Activated B cell treated with CpG ODN at 0.5 μM for 24 hours (primary cell): ENCODE measurements at regions of chr12 and their contacts with region 1.

Region 1: GRCh38 chr12:3275171-3276041 is 198.2 kb downstream of the TSPAN9 start:
- DNase-seq: peak; percentile 66
- ATAC-seq: peak; percentile 57
- H3K4me3 Mint-ChIP-seq: no peak overlapping the region
- H3K27ac Mint-ChIP-seq: no peak overlapping the region
- H3K4me1 Mint-ChIP-seq: peaks cover 2% of the 10 kb centered on the region
- H3K27me3 Mint-ChIP-seq: peaks cover 30% of the 10 kb centered on the region
- CTCF ChIP-seq: peak; percentile 77

Region 2: GRCh38 chr12:3135522-3136461 is 139.6 kb before region 1 on chr12:
- CTCF ChIA-PET with region 1: interaction called, 82 read pairs
- POLR2A ChIA-PET with region 1: no interaction called
- intact Hi-C with region 1: loop called (anchors 1 kb)
- DNase-seq: no peak
- ATAC-seq: peak; percentile 66
- H3K4me3 Mint-ChIP-seq: no peak overlapping the region
- H3K27ac Mint-ChIP-seq: no peak overlapping the region
- H3K4me1 Mint-ChIP-seq: no peaks in the 10 kb centered on the region
- H3K27me3 Mint-ChIP-seq: peaks cover 46% of the 10 kb centered on the region
- CTCF ChIP-seq: peak; percentile 74

Region 3: GRCh38 chr12:3202734-3203446 is 72.5 kb before region 1 on chr12:
- CTCF ChIA-PET with region 1: interaction called, 8 read pairs
- POLR2A ChIA-PET with region 1: no interaction called
- intact Hi-C with region 1: loop called (anchors 5 kb)
- DNase-seq: peak; percentile 33
- ATAC-seq: peak; percentile 60
- H3K4me3 Mint-ChIP-seq: no peak overlapping the region
- H3K27ac Mint-ChIP-seq: no peak overlapping the region
- H3K4me1 Mint-ChIP-seq: peaks cover 11% of the 10 kb centered on the region
- H3K27me3 Mint-ChIP-seq: peaks cover 53% of the 10 kb centered on the region
- CTCF ChIP-seq: no peak

Region 4: DNA sequence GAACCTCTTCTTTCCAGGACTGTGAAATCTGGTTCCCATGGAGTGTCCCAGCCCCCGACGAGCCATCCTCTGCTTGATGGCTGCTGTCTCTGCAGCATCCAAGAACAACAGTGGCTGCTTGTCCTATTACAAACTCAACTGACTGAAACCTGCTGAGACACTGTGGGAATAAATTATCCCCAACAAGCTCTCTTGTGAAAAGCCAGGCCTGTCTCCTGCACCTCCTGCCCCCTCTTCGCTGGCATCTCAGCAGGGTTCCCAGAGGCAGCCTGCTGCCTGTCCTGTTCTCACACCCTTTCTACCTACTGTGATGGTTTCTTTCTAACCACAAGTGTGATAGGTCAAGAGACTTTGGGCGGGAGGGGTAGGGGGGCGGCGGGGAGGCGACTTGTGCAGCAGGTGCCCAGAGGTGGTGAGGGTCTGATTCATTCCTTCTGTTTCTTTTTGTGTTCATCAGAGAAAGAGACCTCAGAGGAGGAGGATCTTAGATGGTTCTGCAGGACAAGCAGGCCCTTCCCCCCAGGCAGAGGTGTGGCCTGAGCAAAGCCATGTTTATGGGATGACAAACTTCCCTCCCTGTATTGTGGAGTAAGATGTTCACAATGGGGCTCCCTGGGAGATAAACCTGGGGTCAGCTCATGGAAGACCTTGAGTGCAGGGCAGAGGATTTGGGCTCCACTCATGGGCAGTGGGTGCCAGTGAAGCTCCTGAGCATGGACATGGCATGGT is 17.8 kb before region 1 on chr12:
- CTCF ChIA-PET with region 1: no interaction called
- POLR2A ChIA-PET with region 1: no interaction called
- intact Hi-C with region 1: no loop called
- DNase-seq: no peak
- ATAC-seq: no peak
- H3K4me3 Mint-ChIP-seq: no peak overlapping the region
- H3K27ac Mint-ChIP-seq: no peak overlapping the region
- H3K4me1 Mint-ChIP-seq: no peaks in the 10 kb centered on the region
- H3K27me3 Mint-ChIP-seq: no peaks in the 10 kb centered on the region
- CTCF ChIP-seq: no peak

Region 5: GRCh38 chr12:3299929-3300832 is 24.8 kb after region 1 on chr12:
- CTCF ChIA-PET with region 1: interaction called, 10 read pairs
- POLR2A ChIA-PET with region 1: no interaction called
- intact Hi-C with region 1: no loop called
- DNase-seq: peak; percentile 63
- ATAC-seq: peak; percentile 85
- H3K4me3 Mint-ChIP-seq: peak overlapping the region; percentile 74
- H3K27ac Mint-ChIP-seq: peak overlapping the region; percentile 73
- H3K4me1 Mint-ChIP-seq: peaks cover 11% of the 10 kb centered on the region
- H3K27me3 Mint-ChIP-seq: peaks cover 25% of the 10 kb centered on the region
- CTCF ChIP-seq: peak; percentile 37